AG04449 (cell line): ENCODE measurements at regions of chr12 and their contacts with region 1.

Region 1: GRCh38 chr12:75526655-75527511 is 15.5 kb upstream of the KRR1 start:
- DNase-seq: no peak
- H3K4me3 ChIP-seq: no peak overlapping the region
- CTCF ChIP-seq: peak; percentile 48

Region 2: DNA sequence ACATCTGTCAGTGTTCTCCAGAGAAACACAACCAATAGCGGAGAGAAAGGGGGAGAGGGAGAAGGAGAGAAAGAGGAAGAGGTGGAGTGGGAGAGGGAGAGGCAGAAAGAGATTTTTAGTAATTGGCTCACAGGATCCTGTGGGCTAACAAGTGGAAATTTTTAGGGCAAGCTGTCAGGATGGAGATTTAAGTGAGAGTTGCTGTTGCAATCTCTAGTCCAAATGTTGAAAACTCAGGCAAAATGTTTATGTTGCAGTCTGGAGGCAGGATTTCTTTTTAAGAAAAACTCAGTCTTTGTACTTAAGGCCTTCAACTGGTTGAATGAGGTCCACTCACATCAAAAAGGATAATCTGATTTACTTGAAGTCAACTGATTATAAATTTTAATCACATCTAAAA is 148.5 kb before region 1 on chr12:
- CTCF ChIA-PET with region 1: no interaction called
- POLR2A ChIA-PET with region 1: no interaction called
- DNase-seq: no peak
- H3K4me3 ChIP-seq: no peak overlapping the region
- CTCF ChIP-seq: no peak

Region 3: DNA sequence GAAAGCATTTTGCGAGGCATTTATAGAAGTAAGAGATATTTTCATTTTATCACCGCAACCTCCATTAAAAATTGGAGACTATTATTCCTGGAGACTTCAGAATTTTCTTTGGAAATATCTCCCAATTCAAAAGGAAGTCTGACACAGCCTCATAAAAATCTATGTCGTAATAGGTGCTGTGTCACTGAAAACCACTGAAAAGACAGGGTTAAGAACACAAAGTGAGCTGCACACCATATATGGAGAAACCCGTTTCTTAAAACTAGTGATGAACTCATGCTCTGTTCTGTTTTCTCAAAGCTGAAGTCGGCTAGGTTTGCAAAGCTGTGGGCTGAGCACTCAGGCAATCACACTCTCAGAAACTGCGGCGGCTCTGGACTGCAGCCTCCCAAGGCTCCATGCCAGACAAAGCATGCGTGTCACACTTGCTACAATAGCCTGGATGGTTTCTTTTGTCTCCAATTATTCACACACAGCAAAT is 46.4 kb before region 1 on chr12 and contains the start of gene GLIPR1:
- CTCF ChIA-PET with region 1: no interaction called
- POLR2A ChIA-PET with region 1: no interaction called
- DNase-seq: peak; percentile 98
- H3K4me3 ChIP-seq: peak within 1 kb of the TSS; percentile 56
- CTCF ChIP-seq: no peak

Region 4: DNA sequence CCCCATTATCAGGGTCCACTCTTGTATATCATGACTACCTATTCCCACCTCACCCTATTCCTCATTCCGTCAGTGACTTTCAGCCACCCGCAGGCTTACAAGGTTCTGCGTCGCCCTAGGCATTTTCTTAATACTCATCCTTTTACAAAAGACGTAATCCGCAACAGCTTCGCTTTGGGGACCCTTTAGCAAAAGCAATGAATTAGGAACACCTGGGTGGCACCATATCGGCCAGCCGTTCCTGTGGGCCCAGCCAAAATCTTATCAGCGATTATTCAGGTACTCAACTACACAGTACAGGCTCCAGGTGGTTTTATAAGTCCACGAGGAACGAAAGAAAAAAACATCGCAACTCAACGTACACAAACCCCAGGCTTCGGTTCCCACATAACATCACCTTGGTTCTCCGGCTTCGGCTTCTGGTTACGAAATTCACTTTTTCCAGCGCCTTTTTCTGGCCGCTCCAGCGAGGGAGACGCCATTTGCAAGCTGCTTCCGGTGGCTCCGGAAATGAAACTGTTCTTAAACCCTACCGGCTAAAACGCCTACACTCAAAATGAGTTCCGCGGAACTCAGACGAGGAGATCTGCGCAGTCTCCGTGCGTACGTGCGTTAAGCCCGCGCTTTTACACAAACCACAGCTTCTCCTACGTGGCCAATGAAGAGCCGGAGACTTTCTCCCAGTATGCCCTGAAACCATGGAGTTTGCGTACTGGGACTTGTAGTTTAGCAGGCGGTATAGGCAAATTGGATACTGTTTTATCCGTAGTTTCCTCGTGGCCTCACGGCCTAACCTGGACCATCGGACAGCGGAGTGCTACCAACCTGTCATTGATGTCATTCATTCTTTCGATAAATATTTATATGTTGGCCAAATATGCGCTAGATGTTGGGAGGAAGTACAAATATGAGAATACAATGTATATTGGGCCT is 15.5 kb before region 1 on chr12 and contains the start of gene KRR1:
- CTCF ChIA-PET with region 1: no interaction called
- POLR2A ChIA-PET with region 1: no interaction called
- DNase-seq: peak; percentile 93
- H3K4me3 ChIP-seq: peak within 1 kb of the TSS; percentile 83
- CTCF ChIP-seq: no peak

Region 5: DNA sequence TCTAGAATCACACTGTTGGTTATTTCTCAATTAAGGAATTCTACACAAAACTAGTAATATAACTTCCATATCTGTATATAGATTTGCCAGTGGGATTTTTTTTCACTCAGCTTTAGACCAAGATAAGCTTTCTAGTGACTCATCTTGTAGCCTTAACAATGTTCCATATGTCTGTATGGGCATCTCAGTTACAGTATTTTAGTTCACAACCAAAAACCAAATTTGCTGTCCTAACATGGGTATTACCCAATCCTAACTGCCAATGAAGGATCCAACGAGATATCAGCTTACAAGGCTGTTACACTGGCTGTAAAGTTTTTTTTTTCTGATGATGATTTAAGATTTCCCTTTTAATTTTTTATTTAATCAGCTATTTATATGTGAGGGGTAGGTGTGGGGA is 16.1 kb after region 1 on chr12:
- CTCF ChIA-PET with region 1: interaction called, 19 read pairs
- POLR2A ChIA-PET with region 1: no interaction called
- DNase-seq: no peak
- H3K4me3 ChIP-seq: no peak overlapping the region
- CTCF ChIP-seq: no peak

Region 6: DNA sequence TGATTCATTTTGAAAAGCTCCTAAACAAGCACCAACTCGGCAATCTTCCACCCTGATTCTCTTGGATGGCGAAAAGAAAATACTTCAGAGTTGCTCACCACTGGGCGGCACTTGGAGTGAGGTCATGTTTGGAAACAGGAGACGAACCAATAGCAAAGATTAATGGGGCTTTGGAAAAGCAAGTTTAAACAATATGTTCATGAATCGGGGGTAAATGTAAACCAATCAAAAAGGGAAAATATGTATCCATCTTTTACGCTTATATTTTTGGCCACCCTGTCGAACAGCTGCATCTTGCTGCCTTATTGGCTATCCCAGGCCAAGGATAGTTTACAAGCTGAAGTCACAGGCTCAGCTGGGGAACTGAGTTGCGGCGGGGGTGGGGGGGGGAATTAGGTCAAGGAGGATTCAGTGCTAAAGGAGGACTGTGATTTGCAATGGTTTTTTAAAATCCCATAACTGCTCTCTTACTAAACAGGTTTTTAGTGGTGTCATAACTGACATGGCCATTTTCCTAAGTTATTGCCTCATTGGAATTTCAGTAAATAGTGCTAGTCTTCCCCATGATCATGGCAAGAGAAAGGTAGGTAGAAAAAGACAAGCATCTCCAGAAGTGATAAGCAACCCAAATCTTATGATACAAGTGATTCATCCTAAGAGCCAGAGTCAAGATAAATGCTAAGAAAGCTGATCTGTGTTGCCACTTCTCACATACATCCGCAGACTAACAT is 294.1 kb after region 1 on chr12:
- CTCF ChIA-PET with region 1: interaction called, 10 read pairs
- POLR2A ChIA-PET with region 1: no interaction called
- DNase-seq: no peak
- H3K4me3 ChIP-seq: no peak overlapping the region
- CTCF ChIP-seq: no peak

Region 7: GRCh38 chr12:76037130-76038103 is 510.5 kb after region 1 on chr12:
- CTCF ChIA-PET with region 1: interaction called, 130 read pairs
- POLR2A ChIA-PET with region 1: no interaction called
- DNase-seq: peak; percentile 51
- H3K4me3 ChIP-seq: no peak overlapping the region
- CTCF ChIP-seq: peak; percentile 57

Region 8: DNA sequence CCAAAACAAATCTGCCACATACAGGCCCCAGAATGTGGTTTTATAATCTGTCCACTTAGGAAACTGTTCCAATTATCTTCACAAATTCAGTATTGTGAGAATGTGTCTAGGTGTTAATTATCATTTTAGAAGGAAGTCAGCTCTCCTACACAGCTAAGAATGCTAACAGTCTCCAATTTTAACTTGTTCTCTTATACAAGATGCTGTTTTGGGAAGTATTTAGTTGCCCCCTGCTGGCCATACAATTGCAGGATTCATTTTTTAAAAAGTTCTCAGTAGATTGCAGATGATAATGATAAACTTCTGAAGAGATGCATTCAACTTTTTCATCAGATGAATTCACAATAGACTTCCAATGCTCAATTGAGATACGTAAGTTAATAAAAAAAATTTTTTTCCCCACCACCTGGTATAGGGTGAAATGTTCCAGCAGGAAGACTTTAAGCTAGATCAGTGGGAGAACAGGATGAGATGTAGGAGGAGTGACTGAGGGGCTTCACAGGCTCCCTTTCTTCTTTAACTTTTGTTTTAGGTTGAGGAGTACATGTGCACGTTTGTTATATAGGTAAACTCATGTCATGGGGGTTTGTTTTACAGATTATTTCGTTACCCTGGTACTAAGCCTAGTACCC is 1060.0 kb after region 1 on chr12:
- CTCF ChIA-PET with region 1: interaction called, 19 read pairs
- POLR2A ChIA-PET with region 1: no interaction called
- DNase-seq: peak; percentile 16
- H3K4me3 ChIP-seq: no peak overlapping the region
- CTCF ChIP-seq: peak; percentile 46